WTC11 (cell line): ENCODE measurements at regions of chr1 and their contacts with region 1.

Region 1: DNA sequence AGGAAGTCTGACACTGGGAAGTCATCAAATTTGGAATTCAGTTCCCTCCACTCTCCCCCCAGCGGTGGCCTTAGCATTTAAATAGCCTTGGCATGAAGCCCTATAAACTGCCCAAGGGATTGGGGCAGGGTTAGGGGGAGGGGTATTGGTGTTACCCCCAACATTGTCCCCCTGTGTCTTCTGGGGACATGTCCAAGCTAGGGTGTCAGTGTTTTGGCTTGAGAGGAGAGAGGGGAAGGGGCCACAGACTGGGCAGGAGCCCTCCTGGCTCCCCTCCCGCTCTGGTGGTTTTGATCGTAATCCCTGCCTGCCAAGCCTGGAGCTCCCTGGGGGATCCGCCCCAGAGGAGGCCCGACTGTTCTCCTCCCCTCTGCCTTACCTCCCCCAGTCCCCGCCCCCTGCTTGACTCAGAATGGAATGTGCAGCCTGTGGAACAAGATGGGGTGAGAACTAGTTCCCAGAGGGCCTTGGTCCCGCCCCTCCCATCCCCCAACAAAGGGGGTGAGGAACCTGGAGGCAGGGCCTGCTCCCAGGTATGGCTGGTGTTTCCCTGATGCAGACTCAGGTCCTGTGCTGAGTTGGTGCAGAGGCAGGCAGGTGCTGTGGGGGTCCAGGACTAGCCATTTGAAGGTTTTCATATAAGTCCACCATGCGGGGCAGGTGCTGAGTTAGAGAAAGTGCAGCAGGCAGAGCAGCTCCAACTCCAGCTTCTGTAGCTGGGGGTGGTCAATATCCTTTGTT is 7.4 kb downstream of the SOX13 start:
- DNase-seq: peak; percentile 98
- ATAC-seq: peak; percentile 74
- H3K4me3 Mint-ChIP-seq: peak overlapping the region; percentile 61
- H3K27ac Mint-ChIP-seq: peak overlapping the region; percentile 100
- H3K4me1 Mint-ChIP-seq: peaks cover 93% of the 10 kb centered on the region
- H3K27me3 Mint-ChIP-seq: peaks cover under 1% of the 10 kb centered on the region; the same call in 1 of the 2 replicates
- CTCF ChIP-seq: no peak

Region 2: GRCh38 chr1:204094856-204095644 is 14.7 kb after region 1 on chr1:
- CTCF ChIA-PET with region 1: interaction called, 8 read pairs
- POLR2A ChIA-PET with region 1: interaction called, 11 read pairs
- DNase-seq: no peak
- ATAC-seq: 0 out of 2 replicates have a peak, but pooled peaks have one; percentile 7
- H3K4me3 Mint-ChIP-seq: peak overlapping the region; percentile 31; the same call in 1 of the 2 replicates
- H3K27ac Mint-ChIP-seq: peak overlapping the region; percentile 84
- H3K4me1 Mint-ChIP-seq: peaks cover 76% of the 10 kb centered on the region
- H3K27me3 Mint-ChIP-seq: no peaks in the 10 kb centered on the region
- CTCF ChIP-seq: no peak

Region 3: GRCh38 chr1:204307334-204307883 is 227.1 kb after region 1 on chr1:
- CTCF ChIA-PET with region 1: no interaction called
- POLR2A ChIA-PET with region 1: no interaction called
- DNase-seq: peak; percentile 64
- ATAC-seq: peak; percentile 85
- H3K4me3 Mint-ChIP-seq: peak overlapping the region; percentile 68
- H3K27ac Mint-ChIP-seq: peak overlapping the region; percentile 35; the same call in 1 of the 2 replicates
- H3K4me1 Mint-ChIP-seq: peaks cover 80% of the 10 kb centered on the region
- H3K27me3 Mint-ChIP-seq: peaks cover 4% of the 10 kb centered on the region
- CTCF ChIP-seq: no peak